ENCODE measurements at regions of chr5 and their contacts with region 1.

Region 1: GRCh38 chr5:137320056-137321045 is 178.8 kb downstream of the SPOCK1 start:
- DNase-seq: peak; percentile 54 to 64
- ATAC-seq: peak; percentile 34 to 72; a peak in 3 of 6 replicates
- H3K4me3 ChIP-seq: no peak overlapping the region
- H3K27ac ChIP-seq: no peak overlapping the region
- H3K4me1 ChIP-seq: peaks cover 7% of the 10 kb centered on the region; the same call in 2 of the 3 replicates
- CTCF ChIP-seq: peak; percentile 85
- EP300 ChIP-seq: no peak
- POLR2A ChIP-seq: no peak
- RAD21 ChIP-seq: peak; percentile 78 to 81

Region 2: DNA sequence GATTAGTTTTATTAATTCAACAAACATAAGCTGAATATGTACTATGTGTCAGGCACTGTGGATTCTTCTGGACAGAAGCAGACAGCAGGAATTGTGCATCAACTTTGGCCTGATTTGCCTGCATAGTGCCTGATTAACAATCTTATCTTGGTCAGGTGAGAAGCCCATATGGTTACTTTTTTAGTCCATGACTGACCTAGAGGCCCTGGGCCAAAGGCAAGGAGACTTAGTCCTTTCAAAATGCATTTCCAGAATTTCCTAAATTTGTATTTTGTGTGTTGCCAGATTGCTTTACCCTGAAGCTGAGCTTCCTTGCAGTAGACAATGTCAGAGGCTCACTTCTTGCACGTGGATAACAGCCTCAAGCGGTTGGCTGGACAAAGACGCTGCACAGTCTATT is 107.9 kb before region 1 on chr5:
- CTCF ChIA-PET with region 1: no interaction called
- POLR2A ChIA-PET with region 1: no interaction called
- DNase-seq: no peak
- ATAC-seq: no peak
- H3K4me3 ChIP-seq: no peak overlapping the region
- H3K27ac ChIP-seq: no peak overlapping the region
- H3K4me1 ChIP-seq: peaks cover 23% of the 10 kb centered on the region
- CTCF ChIP-seq: no peak
- EP300 ChIP-seq: no peak
- POLR2A ChIP-seq: no peak
- RAD21 ChIP-seq: no peak

Region 3: DNA sequence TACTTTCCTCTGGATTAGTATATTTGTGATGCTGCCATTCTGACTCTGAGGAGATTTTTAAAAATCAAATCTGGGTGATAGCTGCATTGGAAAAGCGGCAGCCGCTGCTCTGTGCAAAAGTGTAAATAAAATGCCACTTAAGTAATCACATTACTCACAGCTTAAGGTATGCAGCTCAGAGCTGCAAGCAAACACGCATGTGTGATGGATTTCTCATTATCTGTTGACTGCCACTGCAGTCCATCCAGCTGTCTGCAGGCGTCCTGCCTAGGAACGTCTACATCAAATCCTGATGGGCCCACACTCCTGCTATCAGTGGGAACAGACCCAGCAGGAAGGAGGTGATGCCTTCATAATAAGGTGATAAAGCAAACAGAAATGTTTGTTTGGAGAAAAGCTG is 38.1 kb before region 1 on chr5:
- CTCF ChIA-PET with region 1: interaction called, 10 read pairs
- POLR2A ChIA-PET with region 1: no interaction called
- DNase-seq: peak; percentile 57 to 61
- ATAC-seq: peak; percentile 87 to 92
- H3K4me3 ChIP-seq: no peak overlapping the region
- H3K27ac ChIP-seq: peak overlapping the region in 1 of 2 experiments; percentile 68; a peak in 5 of 6 replicates
- H3K4me1 ChIP-seq: peaks cover 40% of the 10 kb centered on the region
- CTCF ChIP-seq: no peak
- EP300 ChIP-seq: no peak
- POLR2A ChIP-seq: no peak
- RAD21 ChIP-seq: no peak

Region 4: DNA sequence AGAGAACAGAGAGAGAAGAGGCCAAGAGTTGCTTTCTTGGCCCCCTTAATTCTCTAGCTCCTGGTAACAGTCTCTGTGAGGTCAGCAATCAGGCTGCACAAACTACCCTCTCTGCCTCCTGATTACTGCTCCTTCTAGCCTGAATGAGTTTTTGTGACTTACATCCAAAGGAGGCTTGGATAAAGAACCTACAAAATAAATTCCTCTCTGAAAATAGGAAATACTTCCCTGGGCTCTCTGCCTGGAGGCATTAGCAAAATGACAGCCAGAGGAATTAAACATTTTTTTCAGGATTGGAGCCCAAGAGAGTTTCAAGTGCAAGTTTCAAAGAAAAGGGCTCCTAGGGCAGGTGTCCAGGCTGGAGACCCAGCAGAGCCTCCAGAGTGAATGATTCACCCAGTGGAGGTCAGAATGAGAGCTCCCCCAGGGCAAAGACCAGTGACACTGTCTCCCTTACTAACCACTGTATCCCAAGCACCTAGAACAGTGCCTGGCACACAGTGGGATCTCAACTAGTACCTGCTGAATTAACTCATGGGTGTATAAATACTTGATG is 16.3 kb after region 1 on chr5:
- CTCF ChIA-PET with region 1: interaction called, 39 read pairs
- POLR2A ChIA-PET with region 1: no interaction called
- DNase-seq: no peak
- ATAC-seq: no peak
- H3K4me3 ChIP-seq: no peak overlapping the region
- H3K27ac ChIP-seq: no peak overlapping the region
- H3K4me1 ChIP-seq: no peaks in the 10 kb centered on the region
- CTCF ChIP-seq: no peak
- EP300 ChIP-seq: no peak
- POLR2A ChIP-seq: no peak
- RAD21 ChIP-seq: no peak

Region 5: DNA sequence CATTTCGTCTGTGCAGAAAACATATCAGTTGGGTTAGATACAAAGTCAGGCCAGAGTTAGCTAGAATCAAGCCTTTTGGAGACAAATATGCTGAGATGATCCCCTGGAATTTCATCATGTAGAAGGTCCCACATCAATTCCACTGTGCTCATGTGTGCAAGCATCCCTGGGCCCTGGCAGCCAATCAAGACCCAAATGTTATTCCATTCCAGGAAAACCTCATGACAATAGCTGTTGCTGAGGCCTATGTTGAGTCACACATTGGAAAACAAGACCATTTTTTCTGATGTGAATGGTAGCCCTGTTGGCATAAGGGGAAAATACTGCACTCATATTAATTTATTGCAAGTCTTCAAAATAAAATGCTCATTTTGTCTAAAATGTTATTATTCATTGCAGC is 167.2 kb after region 1 on chr5:
- CTCF ChIA-PET with region 1: interaction called, 32 read pairs
- POLR2A ChIA-PET with region 1: no interaction called
- DNase-seq: no peak
- ATAC-seq: no peak
- H3K4me3 ChIP-seq: no peak overlapping the region
- H3K27ac ChIP-seq: no peak overlapping the region
- H3K4me1 ChIP-seq: no peaks in the 10 kb centered on the region
- CTCF ChIP-seq: no peak
- EP300 ChIP-seq: no peak
- POLR2A ChIP-seq: no peak
- RAD21 ChIP-seq: no peak

Measured in A549 (cell line).